ENCODE measurements at regions of chr1 and their contacts with region 1.

Region 1: GRCh38 chr1:87131809-87132283 is 196.8 kb upstream of the LMO4 start:
- DNase-seq: peak; percentile 35 to 80 (median 69)
- ATAC-seq: peak; percentile 94
- H3K4me3 ChIP-seq: peak overlapping the region; percentile 90
- H3K4me3 Mint-ChIP-seq: peak overlapping the region; percentile 79 to 88 (median 83)
- H3K27ac ChIP-seq: no peak overlapping the region
- H3K27ac Mint-ChIP-seq: no peak overlapping the region
- H3K4me1 ChIP-seq: no peaks in the 10 kb centered on the region
- H3K4me1 Mint-ChIP-seq: peaks cover 0 to 13% (median 9%) of the 10 kb centered on the region in 7 donors
- H3K27me3 ChIP-seq: no peaks in the 10 kb centered on the region
- H3K27me3 Mint-ChIP-seq: peaks cover 34 to 43% (median 40%) of the 10 kb centered on the region in 5 donors

Region 2: GRCh38 chr1:87279966-87280535 is 148.2 kb after region 1 on chr1:
- CTCF ChIA-PET with region 1: no interaction called
- POLR2A ChIA-PET with region 1: no interaction called
- intact Hi-C with region 1: loop called in 1 of 2 experiments (anchors 10 kb)
- DNase-seq: no peak
- ATAC-seq: no peak
- H3K4me3 ChIP-seq: no peak overlapping the region
- H3K4me3 Mint-ChIP-seq: no peak overlapping the region
- H3K27ac ChIP-seq: no peak overlapping the region
- H3K27ac Mint-ChIP-seq: no peak overlapping the region
- H3K4me1 ChIP-seq: no peaks in the 10 kb centered on the region
- H3K4me1 Mint-ChIP-seq: no peaks in the 10 kb centered on the region
- H3K27me3 ChIP-seq: no peaks in the 10 kb centered on the region
- H3K27me3 Mint-ChIP-seq: peaks cover 2 to 20% (median 9%) of the 10 kb centered on the region in 5 donors

Region 3: GRCh38 chr1:87953732-87954344 is 822.0 kb after region 1 on chr1:
- CTCF ChIA-PET with region 1: no interaction called
- POLR2A ChIA-PET with region 1: no interaction called
- intact Hi-C with region 1: loop called (anchors 1 to 5 kb)
- DNase-seq: peak; percentile 7 to 54 (median 36)
- ATAC-seq: peak; percentile 70
- H3K4me3 ChIP-seq: no peak overlapping the region
- H3K4me3 Mint-ChIP-seq: no peak overlapping the region
- H3K27ac ChIP-seq: no peak overlapping the region
- H3K27ac Mint-ChIP-seq: no peak overlapping the region
- H3K4me1 ChIP-seq: no peaks in the 10 kb centered on the region
- H3K4me1 Mint-ChIP-seq: no peaks in the 10 kb centered on the region
- H3K27me3 ChIP-seq: no peaks in the 10 kb centered on the region
- H3K27me3 Mint-ChIP-seq: peaks cover 4 to 25% (median 8%) of the 10 kb centered on the region in 5 donors

Region 4: GRCh38 chr1:88061492-88062177 is 929.8 kb after region 1 on chr1:
- CTCF ChIA-PET with region 1: no interaction called
- POLR2A ChIA-PET with region 1: no interaction called
- intact Hi-C with region 1: loop called in 1 of 2 experiments (anchors 2 kb)
- DNase-seq: no peak
- ATAC-seq: no peak
- H3K4me3 ChIP-seq: no peak overlapping the region
- H3K4me3 Mint-ChIP-seq: no peak overlapping the region
- H3K27ac ChIP-seq: no peak overlapping the region
- H3K27ac Mint-ChIP-seq: no peak overlapping the region
- H3K4me1 ChIP-seq: no peaks in the 10 kb centered on the region
- H3K4me1 Mint-ChIP-seq: no peaks in the 10 kb centered on the region
- H3K27me3 ChIP-seq: no peaks in the 10 kb centered on the region
- H3K27me3 Mint-ChIP-seq: peaks cover 0 to 5% (median 0%) of the 10 kb centered on the region in 5 donors

Region 5: DNA sequence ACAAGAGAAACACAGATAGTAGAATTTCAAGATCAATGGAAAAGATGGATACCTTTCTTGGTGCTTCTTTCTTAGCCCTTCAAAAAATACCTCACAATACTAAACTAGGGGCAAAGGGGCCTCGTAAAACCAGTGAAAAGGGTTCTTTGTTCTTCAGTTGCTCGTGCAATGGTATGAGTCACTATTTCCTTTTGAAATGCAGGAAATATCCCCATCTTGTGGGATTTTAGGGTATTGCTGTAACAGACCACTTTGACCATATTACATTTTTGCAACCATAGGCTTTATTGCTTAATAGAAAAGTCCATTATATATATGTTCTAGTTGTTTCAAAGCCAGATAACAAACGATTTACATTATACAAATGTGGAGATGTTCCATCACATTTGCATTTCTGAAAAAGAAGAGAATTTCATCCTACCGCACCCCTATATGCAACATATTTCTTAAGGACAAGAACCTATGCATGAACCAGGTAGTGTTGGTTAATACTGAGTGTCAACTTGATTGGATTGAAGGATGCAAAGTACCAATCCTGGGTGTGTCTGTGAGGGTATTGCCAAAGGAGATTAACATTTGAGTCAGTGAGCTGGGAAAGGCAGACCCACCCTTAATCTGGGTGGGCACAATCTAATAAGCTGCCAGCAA is 1463.6 kb after region 1 on chr1:
- CTCF ChIA-PET with region 1: no interaction called
- POLR2A ChIA-PET with region 1: no interaction called
- intact Hi-C with region 1: loop called (anchors 1 to 10 kb)
- DNase-seq: peak in 7 of 9 donors; percentile 2 to 39 (median 23)
- ATAC-seq: peak; percentile 61
- H3K4me3 ChIP-seq: no peak overlapping the region
- H3K4me3 Mint-ChIP-seq: no peak overlapping the region
- H3K27ac ChIP-seq: no peak overlapping the region
- H3K27ac Mint-ChIP-seq: no peak overlapping the region
- H3K4me1 ChIP-seq: no peaks in the 10 kb centered on the region
- H3K4me1 Mint-ChIP-seq: no peaks in the 10 kb centered on the region
- H3K27me3 ChIP-seq: no peaks in the 10 kb centered on the region
- H3K27me3 Mint-ChIP-seq: peaks cover 0 to 20% (median 12%) of the 10 kb centered on the region in 5 donors

Measured in naive thymus-derived CD4-positive, alpha-beta T cell (primary cell).